Testis (tissue), 5 donors: ENCODE measurements at regions of chr5 and their contacts with region 1.

Region 1: DNA sequence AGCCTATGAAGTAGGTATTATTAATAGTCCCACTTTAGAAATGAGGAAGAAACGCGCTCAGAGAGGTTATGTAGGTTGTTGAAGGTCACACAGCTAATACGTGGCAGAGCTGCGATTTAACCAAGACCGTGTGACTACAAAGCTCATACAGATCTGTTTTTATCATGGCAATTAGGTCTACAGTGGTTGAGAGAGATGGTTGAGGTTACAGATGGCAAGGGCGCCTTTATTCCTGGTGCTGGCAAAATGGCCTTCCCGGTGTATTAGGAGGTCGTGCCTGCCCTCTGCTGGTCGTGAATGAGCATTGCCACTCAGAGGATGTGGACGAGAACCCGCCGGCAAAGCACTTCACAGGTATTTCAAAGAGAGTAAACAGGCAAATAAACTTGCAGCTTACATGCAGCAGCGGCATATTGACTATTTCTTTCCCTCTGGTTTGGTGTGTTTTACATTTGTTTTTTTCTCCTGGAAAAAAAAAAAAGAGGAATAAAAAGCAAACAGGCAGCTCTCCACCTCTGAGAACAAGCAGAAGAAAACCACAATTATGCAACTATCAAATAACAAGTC is 65.3 kb upstream of the EGFLAM start:
- DNase-seq: peak; percentile 87
- H3K4me3 ChIP-seq: no peak overlapping the region
- H3K27ac ChIP-seq: no peak overlapping the region
- H3K4me1 ChIP-seq: no peaks in the 10 kb centered on the region
- H3K27me3 ChIP-seq: no peaks in the 10 kb centered on the region
- CTCF ChIP-seq: peak; percentile 81 to 86 (median 81)
- POLR2A ChIP-seq: no peak

Region 2: DNA sequence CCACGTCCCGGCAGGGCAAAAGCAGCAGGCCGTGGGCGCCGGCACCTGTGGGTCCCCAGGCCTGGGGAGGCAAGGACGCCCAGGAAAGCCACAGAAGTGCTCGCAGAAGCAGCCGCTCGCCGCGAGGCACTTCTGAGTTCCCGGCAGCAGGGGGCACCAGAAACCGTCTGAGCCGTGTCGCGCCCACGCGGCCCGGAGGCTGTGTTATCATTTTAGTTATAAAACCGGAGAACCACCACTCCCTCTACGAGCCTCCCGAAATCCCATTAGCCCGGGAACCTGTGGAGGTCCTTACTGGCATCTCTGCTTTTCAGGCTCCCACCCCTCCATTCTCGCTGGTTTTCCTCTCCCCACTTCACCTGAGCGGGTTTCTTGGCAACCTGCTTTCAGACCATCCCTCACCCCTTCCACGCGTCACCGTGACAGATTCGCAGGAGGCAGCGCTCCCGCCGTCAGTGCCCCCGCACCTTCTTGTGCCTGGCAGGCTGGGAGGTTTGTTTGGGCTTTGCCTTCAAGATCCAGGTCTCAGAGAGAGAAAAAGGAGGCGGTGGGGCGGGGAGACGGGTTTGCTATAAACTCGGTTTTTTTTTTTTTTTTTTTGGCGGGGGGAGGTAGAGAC is 355.6 kb before region 1 on chr5:
- intact Hi-C with region 1: loop called (anchors 5 kb)
- DNase-seq: peak; percentile 81
- H3K4me3 ChIP-seq: peak overlapping the region; percentile 36 to 64
- H3K27ac ChIP-seq: no peak overlapping the region
- H3K4me1 ChIP-seq: peaks cover 13% of the 10 kb centered on the region
- H3K27me3 ChIP-seq: no peaks in the 10 kb centered on the region
- CTCF ChIP-seq: peak; percentile 21 to 69 (median 64)
- POLR2A ChIP-seq: no peak

Region 3: GRCh38 chr5:38023799-38024198 is 169.3 kb before region 1 on chr5:
- intact Hi-C with region 1: no loop called
- DNase-seq: no peak
- H3K4me3 ChIP-seq: no peak overlapping the region
- H3K27ac ChIP-seq: no peak overlapping the region
- H3K4me1 ChIP-seq: no peaks in the 10 kb centered on the region
- H3K27me3 ChIP-seq: no peaks in the 10 kb centered on the region
- CTCF ChIP-seq: peak in 2 of 3 experiments; percentile 9 to 21
- POLR2A ChIP-seq: no peak